ENCODE measurements at regions of chr1 and their contacts with region 1.

Region 1: GRCh38 chr1:224922404-224923164 is 6.9 kb upstream of the DNAH14 start:
- DNase-seq: peak; percentile 31
- ATAC-seq: peak; percentile 92
- H3K4me3 ChIP-seq: no peak overlapping the region
- H3K27ac ChIP-seq: no peak overlapping the region
- H3K4me1 ChIP-seq: no peaks in the 10 kb centered on the region
- H3K27me3 ChIP-seq: no peaks in the 10 kb centered on the region
- CTCF ChIP-seq: peak; percentile 61 to 71 (median 67)
- POLR2A ChIP-seq: no peak
- RAD21 ChIP-seq: peak; percentile 83

Region 2: GRCh38 chr1:224116131-224116530 is 806.5 kb before region 1 on chr1:
- CTCF ChIA-PET with region 1: interaction called, 6 read pairs
- POLR2A ChIA-PET with region 1: no interaction called
- RAD21 ChIA-PET with region 1: no interaction called
- intact Hi-C with region 1: loop called (anchors 5 kb)
- DNase-seq: peak; percentile 56
- ATAC-seq: peak; percentile 48
- H3K4me3 ChIP-seq: no peak overlapping the region
- H3K27ac ChIP-seq: no peak overlapping the region
- H3K4me1 ChIP-seq: peaks cover 15 to 23% of the 10 kb centered on the region in 2 experiments; a peak in 3 of 4 replicates
- H3K27me3 ChIP-seq: no peaks in the 10 kb centered on the region
- CTCF ChIP-seq: peak; percentile 23 to 64 (median 62); a peak in 5 of 6 replicates
- POLR2A ChIP-seq: no peak
- RAD21 ChIP-seq: peak; percentile 78

Region 3: GRCh38 chr1:224434691-224435317 is 487.8 kb before region 1 on chr1 and contains the start of gene WDR26:
- CTCF ChIA-PET with region 1: no interaction called
- POLR2A ChIA-PET with region 1: no interaction called
- RAD21 ChIA-PET with region 1: no interaction called
- intact Hi-C with region 1: loop called (anchors 10 kb)
- DNase-seq: peak; percentile 58
- ATAC-seq: peak; percentile 90
- H3K4me3 ChIP-seq: peak within 1 kb of the TSS; percentile 87 to 93
- H3K27ac ChIP-seq: peak within 1 kb of the TSS; percentile 81
- H3K4me1 ChIP-seq: peaks cover 14 to 30% of the 10 kb centered on the region in 2 experiments; a peak in 3 of 4 replicates
- H3K27me3 ChIP-seq: no peaks in the 10 kb centered on the region
- CTCF ChIP-seq: 0 out of 6 replicates have a peak, but pooled peaks of 1 of the 3 experiments have one; percentile 10
- POLR2A ChIP-seq: peak; percentile 69
- RAD21 ChIP-seq: no peak
- total RNA-seq, gene WDR26: 57.2 TPM

Region 4: DNA sequence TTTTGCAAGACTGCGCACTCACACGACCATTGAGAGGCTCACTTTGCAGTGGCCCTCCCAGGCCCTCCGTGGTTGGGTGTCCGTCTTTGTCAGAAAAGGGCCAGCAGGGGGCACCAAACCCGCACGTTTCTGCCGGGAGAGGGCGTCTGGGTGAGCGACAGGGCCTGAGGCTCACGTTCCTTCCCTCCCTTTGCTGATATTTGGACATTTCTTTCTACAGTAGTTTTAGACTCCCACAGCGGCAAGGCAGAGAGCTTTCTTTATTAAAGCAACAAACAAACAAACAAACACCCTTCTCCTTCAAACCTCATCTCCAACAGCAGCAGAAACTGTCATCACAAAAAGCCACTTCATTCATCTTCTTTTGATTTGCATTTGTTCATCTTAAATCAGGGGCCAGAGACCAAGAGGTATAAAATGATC is 408.8 kb before region 1 on chr1:
- CTCF ChIA-PET with region 1: interaction called, 24 read pairs
- POLR2A ChIA-PET with region 1: no interaction called
- RAD21 ChIA-PET with region 1: interaction called, 3 read pairs
- intact Hi-C with region 1: loop called (anchors 1 kb)
- DNase-seq: peak; percentile 68
- ATAC-seq: peak; percentile 100
- H3K4me3 ChIP-seq: no peak overlapping the region
- H3K27ac ChIP-seq: no peak overlapping the region
- H3K4me1 ChIP-seq: peaks cover 0 to 5% of the 10 kb centered on the region in 2 experiments; a peak in 1 of 4 replicates
- H3K27me3 ChIP-seq: no peaks in the 10 kb centered on the region
- CTCF ChIP-seq: peak; percentile 84 to 98 (median 94)
- POLR2A ChIP-seq: no peak
- RAD21 ChIP-seq: peak; percentile 99

Region 5: DNA sequence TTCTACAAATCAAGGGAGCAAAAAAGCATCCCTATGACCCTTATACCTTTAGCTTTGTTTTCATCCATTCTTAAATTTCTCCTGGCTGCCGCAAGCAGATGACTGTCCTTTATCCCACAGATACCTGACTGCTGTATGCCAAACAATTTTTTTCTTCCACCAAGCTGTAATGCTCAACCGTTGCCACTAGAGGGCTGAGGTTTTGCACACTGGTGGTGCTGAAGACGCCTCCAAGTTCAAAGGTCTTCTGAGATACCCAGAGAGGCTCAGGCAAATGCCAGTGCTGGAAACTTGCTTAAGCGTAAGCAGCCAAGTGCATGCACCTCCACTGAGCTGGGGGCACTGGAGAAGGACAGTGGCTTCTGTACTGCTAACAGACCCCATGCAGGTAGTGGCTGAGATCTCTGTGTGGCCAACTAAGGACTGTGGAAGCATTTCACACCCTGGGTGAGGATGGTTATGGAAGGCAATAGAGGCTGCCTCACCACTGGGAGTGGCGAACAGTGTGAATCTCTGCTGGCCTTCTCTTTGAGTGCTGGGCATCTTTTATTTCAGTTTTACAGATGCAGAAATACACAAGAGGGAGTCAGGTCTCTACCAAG is 277.9 kb before region 1 on chr1:
- CTCF ChIA-PET with region 1: interaction called, 21 read pairs
- POLR2A ChIA-PET with region 1: no interaction called
- RAD21 ChIA-PET with region 1: interaction called in 1 of 2 experiments, 3 read pairs
- intact Hi-C with region 1: loop called (anchors 1 kb)
- DNase-seq: peak; percentile 47
- ATAC-seq: peak; percentile 85
- H3K4me3 ChIP-seq: no peak overlapping the region
- H3K27ac ChIP-seq: no peak overlapping the region
- H3K4me1 ChIP-seq: no peaks in the 10 kb centered on the region
- H3K27me3 ChIP-seq: no peaks in the 10 kb centered on the region
- CTCF ChIP-seq: peak; percentile 83 to 87 (median 85)
- POLR2A ChIP-seq: no peak
- RAD21 ChIP-seq: peak; percentile 76

Region 6: GRCh38 chr1:224851210-224851847 is 71.3 kb before region 1 on chr1:
- CTCF ChIA-PET with region 1: interaction called, 35 read pairs
- POLR2A ChIA-PET with region 1: interaction called, 3 read pairs
- RAD21 ChIA-PET with region 1: no interaction called
- intact Hi-C with region 1: no loop called
- DNase-seq: peak; percentile 35
- ATAC-seq: peak; percentile 90
- H3K4me3 ChIP-seq: no peak overlapping the region
- H3K27ac ChIP-seq: no peak overlapping the region
- H3K4me1 ChIP-seq: no peaks in the 10 kb centered on the region
- H3K27me3 ChIP-seq: no peaks in the 10 kb centered on the region
- CTCF ChIP-seq: peak; percentile 76 to 94 (median 94)
- POLR2A ChIP-seq: no peak
- RAD21 ChIP-seq: peak; percentile 69

Region 7: DNA sequence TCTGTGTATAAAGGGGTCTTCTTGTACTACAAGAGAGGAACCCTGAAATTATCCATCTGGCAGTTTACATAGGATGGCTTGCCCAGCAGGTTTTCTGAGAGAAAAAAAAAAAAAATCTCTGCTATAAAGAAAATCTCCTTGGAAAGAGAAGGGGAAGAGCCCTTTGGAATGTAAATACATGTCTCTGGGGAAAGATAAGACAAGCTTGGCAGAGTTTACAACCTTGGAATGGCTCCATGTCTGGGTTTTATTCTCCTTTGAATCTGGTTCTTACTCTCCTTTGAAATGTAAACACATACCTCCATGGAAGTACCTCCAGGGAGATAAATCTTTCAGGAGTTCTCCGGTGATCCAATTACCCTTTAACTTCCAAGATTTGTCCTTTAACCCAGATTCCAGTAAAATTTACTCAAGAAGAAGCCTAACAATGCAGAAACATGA is 38.2 kb before region 1 on chr1:
- CTCF ChIA-PET with region 1: no interaction called
- POLR2A ChIA-PET with region 1: no interaction called
- RAD21 ChIA-PET with region 1: no interaction called
- intact Hi-C with region 1: no loop called
- DNase-seq: no peak
- ATAC-seq: no peak
- H3K4me3 ChIP-seq: no peak overlapping the region
- H3K27ac ChIP-seq: no peak overlapping the region
- H3K4me1 ChIP-seq: no peaks in the 10 kb centered on the region
- H3K27me3 ChIP-seq: no peaks in the 10 kb centered on the region
- CTCF ChIP-seq: no peak
- POLR2A ChIP-seq: no peak
- RAD21 ChIP-seq: no peak

Region 8: GRCh38 chr1:224894918-224895317 is 27.7 kb before region 1 on chr1:
- CTCF ChIA-PET with region 1: interaction called, 12 read pairs
- POLR2A ChIA-PET with region 1: no interaction called
- RAD21 ChIA-PET with region 1: no interaction called
- intact Hi-C with region 1: no loop called
- DNase-seq: peak; percentile 18
- ATAC-seq: peak; percentile 79
- H3K4me3 ChIP-seq: no peak overlapping the region
- H3K27ac ChIP-seq: no peak overlapping the region
- H3K4me1 ChIP-seq: no peaks in the 10 kb centered on the region
- H3K27me3 ChIP-seq: no peaks in the 10 kb centered on the region
- CTCF ChIP-seq: peak; percentile 26 to 47 (median 28); a peak in 4 of 6 replicates
- POLR2A ChIP-seq: no peak
- RAD21 ChIP-seq: peak; percentile 62

Region 9: GRCh38 chr1:225209153-225209552 is 286.6 kb after region 1 on chr1:
- CTCF ChIA-PET with region 1: no interaction called
- POLR2A ChIA-PET with region 1: no interaction called
- RAD21 ChIA-PET with region 1: no interaction called
- intact Hi-C with region 1: no loop called
- DNase-seq: no peak
- ATAC-seq: no peak
- H3K4me3 ChIP-seq: no peak overlapping the region
- H3K27ac ChIP-seq: no peak overlapping the region
- H3K4me1 ChIP-seq: no peaks in the 10 kb centered on the region
- H3K27me3 ChIP-seq: no peaks in the 10 kb centered on the region
- CTCF ChIP-seq: no peak
- POLR2A ChIP-seq: no peak
- RAD21 ChIP-seq: no peak